MCF 10A (cell line): ENCODE measurements at regions of chr1 and their contacts with region 1.

Region 1: DNA sequence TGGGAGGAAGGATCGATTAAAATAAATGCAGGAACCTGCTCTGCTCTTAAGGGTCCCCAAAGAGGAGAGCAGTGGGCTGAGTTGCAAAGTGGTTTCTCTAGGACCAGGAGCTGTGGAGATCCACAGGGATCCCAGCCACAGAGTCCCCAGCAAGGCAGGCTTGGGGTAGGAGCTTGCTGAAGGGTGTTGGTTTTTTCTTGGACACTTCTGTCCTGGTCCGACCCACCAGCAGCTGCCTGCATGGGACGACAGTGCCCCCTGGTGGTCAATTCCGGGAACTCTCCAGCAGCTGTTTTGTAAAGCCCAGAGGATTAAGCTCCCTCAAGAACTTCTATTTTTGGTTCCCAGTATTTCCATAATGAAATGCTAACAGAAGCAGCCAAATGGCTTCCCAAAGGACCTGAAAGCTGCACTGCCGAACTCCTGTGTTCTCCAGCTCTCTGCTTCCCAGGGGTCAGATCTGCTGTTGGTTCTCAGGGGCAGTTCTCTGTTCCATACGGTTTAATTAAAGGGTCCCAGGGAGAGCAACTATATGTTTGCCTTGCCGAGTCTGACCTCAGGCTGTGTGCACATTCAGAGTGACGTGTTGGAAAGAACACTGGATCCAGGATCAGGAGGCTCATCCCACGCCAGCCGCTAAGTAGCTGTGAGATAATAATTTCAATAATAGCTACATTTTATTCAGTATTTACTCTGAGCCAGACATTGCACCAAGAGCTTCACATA is 23.2 kb downstream of the NENF start:
- DNase-seq: peak; percentile 88
- H3K4me3 Mint-ChIP-seq: no peak overlapping the region
- H3K27ac Mint-ChIP-seq: no peak overlapping the region
- H3K4me1 Mint-ChIP-seq: no peaks in the 10 kb centered on the region
- H3K27me3 Mint-ChIP-seq: no peaks in the 10 kb centered on the region
- CTCF ChIP-seq: peak; percentile 100

Region 2: DNA sequence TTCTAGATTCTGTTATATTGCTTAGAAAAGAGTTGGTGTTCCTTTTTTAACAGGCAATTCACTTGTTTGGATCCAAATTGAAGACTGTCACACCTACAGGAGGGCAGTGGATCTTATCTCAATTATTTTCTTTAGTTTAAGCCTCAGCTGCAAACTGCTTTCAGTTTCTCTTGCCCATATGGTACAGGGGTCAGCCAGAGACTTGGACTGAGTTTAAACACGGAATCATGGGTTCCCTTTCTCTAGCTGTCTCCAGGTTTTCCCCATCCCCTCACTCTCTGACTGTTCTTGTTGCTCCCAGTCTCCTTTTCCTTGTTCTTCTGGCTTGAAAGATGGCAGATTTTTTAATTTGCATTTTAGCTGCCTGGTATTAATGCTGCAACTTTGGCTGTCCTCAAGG is 402.0 kb before region 1 on chr1:
- CTCF ChIA-PET with region 1: interaction called, 57 read pairs
- POLR2A ChIA-PET with region 1: no interaction called
- intact Hi-C with region 1: no loop called
- DNase-seq: no peak
- H3K4me3 Mint-ChIP-seq: no peak overlapping the region
- H3K27ac Mint-ChIP-seq: no peak overlapping the region
- H3K4me1 Mint-ChIP-seq: peaks cover 12% of the 10 kb centered on the region
- H3K27me3 Mint-ChIP-seq: no peaks in the 10 kb centered on the region
- CTCF ChIP-seq: no peak

Region 3: GRCh38 chr1:212291505-212292134 is 164.3 kb before region 1 on chr1:
- CTCF ChIA-PET with region 1: interaction called, 50 read pairs
- POLR2A ChIA-PET with region 1: interaction called, 3 read pairs
- intact Hi-C with region 1: loop called (anchors 1 kb)
- DNase-seq: peak; percentile 85
- H3K4me3 Mint-ChIP-seq: no peak overlapping the region
- H3K27ac Mint-ChIP-seq: peak overlapping the region; percentile 25
- H3K4me1 Mint-ChIP-seq: peaks cover 54% of the 10 kb centered on the region
- H3K27me3 Mint-ChIP-seq: no peaks in the 10 kb centered on the region
- CTCF ChIP-seq: peak; percentile 80

Region 4: DNA sequence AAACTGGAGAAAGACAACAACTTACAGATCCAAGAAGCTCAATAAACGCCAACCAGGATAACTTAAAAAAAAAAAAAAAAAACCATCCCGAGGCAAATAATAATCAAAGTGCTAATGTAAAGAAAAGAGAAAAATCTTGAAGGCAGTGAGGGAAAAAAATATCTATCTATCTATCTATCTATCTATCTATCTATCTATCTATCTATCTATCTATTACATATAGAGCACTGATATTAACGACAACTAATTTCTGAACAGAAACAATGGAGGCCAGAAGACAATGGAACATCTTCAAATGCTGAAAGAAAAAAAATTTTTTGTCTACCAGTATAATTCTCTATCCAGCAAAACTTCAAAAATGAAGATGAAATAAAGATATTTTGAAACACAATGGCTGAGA is 59.3 kb before region 1 on chr1:
- CTCF ChIA-PET with region 1: interaction called, 12 read pairs
- POLR2A ChIA-PET with region 1: no interaction called
- intact Hi-C with region 1: no loop called
- DNase-seq: peak; percentile 24
- H3K4me3 Mint-ChIP-seq: no peak overlapping the region
- H3K27ac Mint-ChIP-seq: no peak overlapping the region
- H3K4me1 Mint-ChIP-seq: no peaks in the 10 kb centered on the region
- H3K27me3 Mint-ChIP-seq: no peaks in the 10 kb centered on the region
- CTCF ChIP-seq: no peak

Region 5: DNA sequence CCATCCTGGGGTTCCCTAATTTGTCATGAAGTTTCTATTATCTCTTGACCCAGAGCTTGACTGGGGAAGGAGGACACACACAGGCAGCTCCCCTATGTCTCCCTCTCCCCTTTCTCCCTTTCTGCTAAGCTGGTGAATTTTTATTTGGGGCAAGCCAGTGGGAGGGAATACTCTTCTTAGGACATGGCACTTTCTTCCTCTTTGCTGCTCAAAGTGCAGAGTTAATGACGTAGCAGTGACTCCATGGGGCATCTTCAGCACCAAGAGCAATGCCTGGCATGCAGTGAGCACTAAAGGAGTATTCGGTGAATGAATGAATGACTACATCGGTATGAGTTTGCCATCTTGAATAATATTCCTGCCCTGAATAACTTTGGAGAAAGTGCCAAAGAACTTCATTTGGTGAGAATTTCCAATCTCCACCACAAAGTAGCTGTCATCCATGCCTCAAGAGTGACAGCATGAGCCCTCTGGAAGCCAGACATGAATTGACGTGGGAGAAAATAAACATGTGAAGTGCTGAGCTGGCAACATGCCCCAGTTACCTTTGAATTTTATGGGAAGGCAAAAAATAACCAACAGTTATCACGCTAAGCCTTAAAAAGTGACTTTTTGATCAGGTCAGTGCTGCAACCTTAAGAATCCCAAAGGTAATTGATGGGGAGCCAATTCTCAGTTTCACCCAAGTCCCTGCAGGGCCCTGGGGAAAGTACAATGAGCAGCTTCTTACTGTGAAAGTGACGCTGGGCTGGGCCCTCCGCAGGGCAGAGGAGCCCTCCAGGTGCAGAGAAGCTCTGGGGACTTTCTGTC is 130.4 kb after region 1 on chr1:
- CTCF ChIA-PET with region 1: interaction called, 13 read pairs
- POLR2A ChIA-PET with region 1: interaction called, 3 read pairs
- intact Hi-C with region 1: no loop called
- DNase-seq: no peak
- H3K4me3 Mint-ChIP-seq: no peak overlapping the region
- H3K27ac Mint-ChIP-seq: no peak overlapping the region
- H3K4me1 Mint-ChIP-seq: peaks cover 6% of the 10 kb centered on the region
- H3K27me3 Mint-ChIP-seq: peaks cover 38% of the 10 kb centered on the region
- CTCF ChIP-seq: no peak

Region 6: GRCh38 chr1:212782422-212783154 is 326.6 kb after region 1 on chr1:
- CTCF ChIA-PET with region 1: interaction called, 69 read pairs
- POLR2A ChIA-PET with region 1: interaction called, 3 read pairs
- intact Hi-C with region 1: loop called (anchors 1 kb)
- DNase-seq: peak; percentile 58
- H3K4me3 Mint-ChIP-seq: no peak overlapping the region
- H3K27ac Mint-ChIP-seq: peak overlapping the region; percentile 57
- H3K4me1 Mint-ChIP-seq: peaks cover 7% of the 10 kb centered on the region
- H3K27me3 Mint-ChIP-seq: no peaks in the 10 kb centered on the region
- CTCF ChIP-seq: peak; percentile 84

Region 7: DNA sequence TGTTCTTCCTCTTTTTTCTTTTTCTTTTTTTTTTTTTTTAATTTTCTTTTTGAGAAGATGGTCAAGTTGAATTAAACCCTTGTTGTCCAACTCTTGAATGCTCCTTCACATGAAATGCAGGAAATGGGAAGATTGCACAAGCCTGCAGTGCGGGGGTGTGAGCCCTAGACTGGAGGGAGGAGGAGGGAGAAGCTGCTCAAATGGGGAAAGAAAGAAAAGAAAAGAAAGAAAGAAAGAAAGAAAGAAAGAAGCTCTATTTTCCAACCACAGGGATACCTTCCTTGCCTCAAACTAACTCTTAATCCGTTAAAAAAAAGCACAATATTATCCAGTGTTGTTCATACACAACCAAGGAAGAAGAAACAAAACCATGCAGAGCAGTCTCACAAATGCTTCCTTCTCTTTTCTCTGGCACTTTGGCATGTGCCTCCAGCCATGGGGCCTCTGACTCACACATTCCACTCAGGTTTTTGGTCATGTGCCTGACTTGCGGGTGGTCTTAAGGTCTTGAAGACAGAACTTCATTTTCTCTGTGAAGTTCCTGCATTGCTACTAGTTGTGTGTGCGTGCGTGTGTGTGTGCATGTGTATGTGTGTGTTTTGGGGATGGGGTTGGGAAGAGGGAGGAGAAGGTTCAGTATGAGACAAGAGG is 871.2 kb after region 1 on chr1:
- CTCF ChIA-PET with region 1: no interaction called
- POLR2A ChIA-PET with region 1: no interaction called
- intact Hi-C with region 1: no loop called
- DNase-seq: peak; percentile 84
- H3K4me3 Mint-ChIP-seq: peak overlapping the region; percentile 37
- H3K27ac Mint-ChIP-seq: peak overlapping the region; percentile 26
- H3K4me1 Mint-ChIP-seq: peaks cover 21% of the 10 kb centered on the region
- H3K27me3 Mint-ChIP-seq: no peaks in the 10 kb centered on the region
- CTCF ChIP-seq: no peak